Heart left ventricle (tissue), 16 donors: ENCODE measurements at regions of chr9 and their contacts with region 1.

Region 1: GRCh38 chr9:129995409-129996160 is 47.4 kb downstream of the FNBP1 start:
- DNase-seq: no peak
- ATAC-seq: peak in 2 of 4 donors; percentile 28 to 63
- H3K4me3 ChIP-seq: no peak overlapping the region
- H3K27ac ChIP-seq: peak overlapping the region in 6 of 12 donors; percentile 6 to 87 (median 46)
- H3K4me1 ChIP-seq: peaks cover 0 to 57% (median 17%) of the 10 kb centered on the region in 12 donors
- H3K27me3 ChIP-seq: no peaks in the 10 kb centered on the region
- CTCF ChIP-seq: no peak
- POLR2A ChIP-seq: no peak

Region 2: GRCh38 chr9:129954868-129955550 is 40.6 kb before region 1 on chr9:
- intact Hi-C with region 1: loop called in 1 of 10 experiments (anchors 2 kb)
- DNase-seq: no peak
- ATAC-seq: peak in 1 of 4 donors; percentile 56
- H3K4me3 ChIP-seq: no peak overlapping the region
- H3K27ac ChIP-seq: peak overlapping the region in 3 of 12 donors; percentile 24 to 75 (median 65)
- H3K4me1 ChIP-seq: peaks cover 0 to 48% (median 3%) of the 10 kb centered on the region in 12 donors
- H3K27me3 ChIP-seq: no peaks in the 10 kb centered on the region
- CTCF ChIP-seq: no peak
- POLR2A ChIP-seq: no peak